Activated CD4-positive, alpha-beta T cell treated with anti-CD3 and anti-CD28 coated beads for 36 hours (primary cell): ENCODE measurements at regions of chr2 and their contacts with region 1.

Region 1: GRCh38 chr2:6860296-6860695 is 5.4 kb downstream of the CMPK2 start:
- DNase-seq: no peak
- ATAC-seq: no peak
- H3K4me3 Mint-ChIP-seq: no peak overlapping the region
- H3K27ac Mint-ChIP-seq: no peak overlapping the region
- H3K4me1 Mint-ChIP-seq: peaks cover 13% of the 10 kb centered on the region
- H3K27me3 Mint-ChIP-seq: peaks cover 3% of the 10 kb centered on the region

Region 2: GRCh38 chr2:6846967-6847681 is 13.2 kb before region 1 on chr2:
- CTCF ChIA-PET with region 1: interaction called, 10 read pairs
- POLR2A ChIA-PET with region 1: no interaction called
- intact Hi-C with region 1: no loop called
- DNase-seq: no peak
- ATAC-seq: no peak
- H3K4me3 Mint-ChIP-seq: no peak overlapping the region
- H3K27ac Mint-ChIP-seq: no peak overlapping the region
- H3K4me1 Mint-ChIP-seq: no peaks in the 10 kb centered on the region
- H3K27me3 Mint-ChIP-seq: no peaks in the 10 kb centered on the region

Region 3: DNA sequence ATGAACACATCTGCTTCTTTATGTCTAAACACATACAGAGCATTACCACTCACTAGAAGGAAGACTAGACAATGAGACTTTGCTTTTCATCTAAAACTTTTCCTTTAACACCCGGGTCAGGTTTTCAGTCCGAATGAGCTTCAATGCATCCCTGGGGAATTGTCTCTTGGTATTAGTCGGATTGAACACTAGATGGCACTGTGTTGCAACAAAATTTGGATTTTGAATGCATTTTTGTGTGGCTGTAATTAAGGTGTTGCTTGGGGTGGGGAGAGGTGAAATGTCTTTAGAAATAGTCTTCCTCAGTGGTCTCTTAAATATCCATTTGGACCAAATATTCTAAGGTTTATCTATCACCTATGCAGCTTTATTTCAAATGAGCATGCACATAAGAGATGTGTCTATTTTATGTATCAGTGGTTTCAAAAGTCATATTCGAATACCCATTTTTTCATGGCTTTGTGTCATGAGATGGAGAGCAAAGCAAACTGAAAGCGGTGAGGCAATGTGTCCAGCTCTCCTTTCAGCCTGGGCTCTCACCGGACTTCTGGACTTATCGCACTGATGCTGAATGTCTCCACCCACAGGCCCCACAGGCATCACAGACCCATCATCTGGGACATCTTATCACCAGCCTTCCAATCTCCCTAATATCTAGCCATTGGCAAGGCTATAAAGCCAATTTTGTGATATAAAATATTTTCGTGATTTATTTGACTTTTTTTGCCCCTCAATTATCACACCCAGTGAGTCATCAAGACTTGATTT is 567.2 kb after region 1 on chr2:
- CTCF ChIA-PET with region 1: no interaction called
- POLR2A ChIA-PET with region 1: no interaction called
- intact Hi-C with region 1: no loop called
- DNase-seq: no peak
- ATAC-seq: no peak
- H3K4me3 Mint-ChIP-seq: no peak overlapping the region
- H3K27ac Mint-ChIP-seq: peak overlapping the region; percentile 51
- H3K4me1 Mint-ChIP-seq: peaks cover 41% of the 10 kb centered on the region
- H3K27me3 Mint-ChIP-seq: peaks cover 9% of the 10 kb centered on the region